Lower lobe of right lung (tissue), 2 donors: ENCODE measurements at regions of chr9 and their contacts with region 1.

Region 1: DNA sequence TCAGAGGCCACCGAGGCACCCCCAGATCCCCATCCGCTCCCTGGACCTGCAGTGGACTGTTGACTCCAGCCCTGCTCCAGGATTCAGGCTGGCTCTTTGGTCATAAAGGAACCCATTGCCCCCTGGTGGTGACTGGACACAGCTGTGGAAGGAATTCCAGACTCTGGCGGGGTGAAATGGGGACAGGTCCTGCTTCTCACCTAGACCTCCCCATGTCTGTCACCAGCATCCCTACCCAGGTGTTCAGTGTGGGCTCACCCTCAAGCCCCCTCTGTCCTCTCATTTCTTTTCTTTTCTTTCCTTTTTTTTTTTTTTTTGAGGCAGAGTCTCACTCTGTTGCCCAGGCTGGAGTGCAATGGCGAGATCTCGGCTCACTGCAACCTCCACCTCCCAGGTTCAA is 25.5 kb upstream of the STXBP1 start:
- DNase-seq: peak; percentile 81
- ATAC-seq: peak; percentile 90 to 91
- H3K4me3 ChIP-seq: no peak overlapping the region
- H3K27ac ChIP-seq: no peak overlapping the region
- H3K4me1 ChIP-seq: peaks cover 23% of the 10 kb centered on the region
- H3K27me3 ChIP-seq: no peaks in the 10 kb centered on the region
- CTCF ChIP-seq: peak; percentile 87

Region 2: DNA sequence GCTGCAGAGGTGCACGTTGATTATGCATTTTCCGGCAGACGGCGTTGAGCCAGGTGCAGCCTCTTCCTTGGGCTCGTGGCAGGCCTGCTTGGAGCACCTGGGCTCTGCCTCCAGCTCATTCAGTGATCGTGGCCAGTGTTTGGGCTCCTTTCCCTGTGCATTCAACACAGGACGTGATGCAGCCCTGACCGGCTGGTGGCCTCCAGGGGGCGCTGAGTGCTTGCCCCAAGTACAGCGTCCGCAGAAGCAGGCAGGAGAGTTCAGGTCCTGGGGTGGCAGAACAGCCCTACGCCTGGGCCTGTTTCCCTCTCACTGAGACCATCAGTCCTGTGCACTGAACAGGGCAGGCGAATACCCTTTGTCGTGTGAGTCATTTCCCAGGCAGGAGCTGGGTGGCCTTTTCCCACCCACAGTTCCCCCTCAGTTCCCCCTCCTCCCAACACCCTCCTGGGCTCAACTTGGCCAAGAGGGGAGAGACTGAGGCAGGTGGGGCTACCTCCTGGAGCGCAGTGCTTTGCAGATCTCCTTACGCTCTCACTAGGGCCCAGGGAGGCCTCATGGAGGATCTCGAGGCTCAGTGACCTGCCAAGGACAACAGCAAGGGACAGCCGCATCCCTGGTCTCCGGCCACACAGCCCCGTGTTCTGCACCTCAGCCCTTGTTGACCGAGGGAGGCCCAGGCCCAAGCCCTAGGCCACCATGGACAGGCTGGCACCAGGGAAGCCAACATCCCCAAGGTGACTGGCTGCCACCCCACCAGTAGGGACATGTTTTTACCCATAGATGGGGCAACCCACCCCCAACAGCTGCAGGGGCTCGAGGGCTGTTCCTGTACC is 82.4 kb before region 1 on chr9:
- intact Hi-C with region 1: loop called (anchors 5 kb)
- DNase-seq: peak; percentile 86
- ATAC-seq: peak; percentile 77 to 83
- H3K4me3 ChIP-seq: no peak overlapping the region
- H3K27ac ChIP-seq: no peak overlapping the region
- H3K4me1 ChIP-seq: no peaks in the 10 kb centered on the region
- H3K27me3 ChIP-seq: no peaks in the 10 kb centered on the region
- CTCF ChIP-seq: peak; percentile 92

Region 3: GRCh38 chr9:127667127-127667844 is 80.7 kb after region 1 on chr9:
- intact Hi-C with region 1: no loop called
- DNase-seq: no peak
- ATAC-seq: no peak
- H3K4me3 ChIP-seq: no peak overlapping the region
- H3K27ac ChIP-seq: no peak overlapping the region
- H3K4me1 ChIP-seq: peaks cover 8% of the 10 kb centered on the region
- H3K27me3 ChIP-seq: no peaks in the 10 kb centered on the region
- CTCF ChIP-seq: no peak

Region 4: GRCh38 chr9:127734747-127735529 is 148.4 kb after region 1 on chr9 and contains the start of gene TOR2A:
- intact Hi-C with region 1: loop called (anchors 10 kb)
- DNase-seq: peak; percentile 99
- ATAC-seq: peak; percentile 98
- H3K4me3 ChIP-seq: peak within 1 kb of the TSS; percentile 86
- H3K27ac ChIP-seq: peak within 1 kb of the TSS; percentile 98
- H3K4me1 ChIP-seq: peaks cover 15% of the 10 kb centered on the region
- H3K27me3 ChIP-seq: no peaks in the 10 kb centered on the region
- CTCF ChIP-seq: peak; percentile 97
- total RNA-seq, gene TOR2A: 16.5 TPM